ENCODE measurements at regions of chr17 and their contacts with region 1.

Region 1: DNA sequence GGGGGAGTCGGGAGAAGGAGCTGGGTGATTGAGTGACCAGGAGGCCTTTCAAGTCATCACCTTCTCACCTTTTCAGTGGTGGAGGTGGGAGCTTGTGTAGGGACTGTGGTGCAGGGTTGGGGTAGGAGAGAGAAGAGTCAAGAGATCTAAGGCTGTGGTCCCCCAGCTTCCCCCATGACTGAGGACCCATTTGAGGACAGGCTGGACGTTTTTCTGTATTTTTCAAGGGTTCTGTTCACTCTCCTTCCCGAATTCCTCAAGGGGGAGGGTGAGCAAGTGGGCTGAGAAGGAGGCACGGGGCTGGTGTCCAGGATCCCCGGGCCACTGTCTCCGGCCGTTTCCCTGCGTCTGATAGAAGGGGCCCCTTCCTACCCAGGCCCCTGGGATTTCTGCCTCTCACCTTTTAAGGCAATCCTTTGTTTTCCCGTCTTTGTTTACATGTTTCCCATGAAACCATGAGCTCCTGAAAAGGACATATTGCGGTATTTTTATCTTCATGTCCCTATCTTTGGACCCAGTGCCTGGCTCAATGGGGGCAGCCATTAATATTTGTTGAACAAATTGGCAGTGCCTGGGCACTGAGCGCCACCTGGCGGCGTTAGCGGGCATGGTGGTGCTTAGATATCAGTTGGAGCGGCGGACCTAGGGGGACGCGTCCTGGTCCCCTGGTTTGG is 9.2 kb upstream of the CD300A start:
- DNase-seq: peak; percentile 86
- ATAC-seq: peak; percentile 13
- H3K4me3 Mint-ChIP-seq: no peak overlapping the region
- H3K27ac Mint-ChIP-seq: no peak overlapping the region
- H3K4me1 Mint-ChIP-seq: peaks cover 36% of the 10 kb centered on the region
- H3K27me3 Mint-ChIP-seq: peaks cover 21% of the 10 kb centered on the region
- CTCF ChIP-seq: peak; percentile 89

Region 2: DNA sequence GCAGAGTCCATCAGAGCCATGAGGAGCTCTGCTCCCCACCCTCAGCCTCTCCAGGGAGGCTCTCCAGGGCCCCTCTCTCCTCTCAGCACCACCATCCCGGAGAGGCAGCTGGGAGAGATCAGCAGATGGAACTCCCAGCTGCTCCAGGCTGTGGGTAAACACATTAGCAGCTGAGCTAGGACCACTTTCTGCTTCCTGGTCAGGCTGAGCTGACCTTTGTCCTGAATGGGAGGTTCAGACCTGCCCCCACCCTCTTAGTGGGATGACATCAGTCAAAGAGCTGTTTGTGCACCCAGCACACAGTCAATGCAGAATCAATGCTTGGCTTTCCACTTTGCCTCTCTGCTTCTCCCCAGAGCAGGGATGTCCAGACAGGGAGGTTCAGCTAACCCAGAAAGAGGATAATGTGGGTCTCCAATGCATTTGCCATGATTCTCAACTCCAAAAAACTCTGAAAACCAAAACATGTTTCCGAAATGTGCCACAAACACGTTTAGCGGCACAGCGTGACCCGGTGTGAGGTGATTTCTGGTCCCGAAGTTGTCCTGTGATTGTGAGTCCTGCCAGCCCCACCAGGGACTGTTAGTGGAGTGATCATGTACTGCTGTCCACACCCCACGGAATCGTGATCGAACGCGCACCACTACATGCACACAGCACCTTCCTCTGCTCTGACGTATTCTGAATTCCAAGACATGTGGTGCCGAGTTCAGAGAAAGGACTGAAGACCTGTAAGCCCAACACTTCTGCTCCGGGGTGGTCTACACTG is 83.3 kb before region 1 on chr17:
- CTCF ChIA-PET with region 1: interaction called, 16 read pairs
- POLR2A ChIA-PET with region 1: interaction called, 14 read pairs
- DNase-seq: no peak
- ATAC-seq: no peak
- H3K4me3 Mint-ChIP-seq: no peak overlapping the region
- H3K27ac Mint-ChIP-seq: no peak overlapping the region; the same call in 1 of the 2 replicates
- H3K4me1 Mint-ChIP-seq: peaks cover 6% of the 10 kb centered on the region
- H3K27me3 Mint-ChIP-seq: peaks cover 2% of the 10 kb centered on the region; the same call in 1 of the 2 replicates
- CTCF ChIP-seq: no peak

Region 3: GRCh38 chr17:74430706-74431567 is 26.3 kb before region 1 on chr17:
- CTCF ChIA-PET with region 1: interaction called, 151 read pairs
- POLR2A ChIA-PET with region 1: interaction called, 17 read pairs
- DNase-seq: peak; percentile 77
- ATAC-seq: peak; percentile 7
- H3K4me3 Mint-ChIP-seq: peak overlapping the region; percentile 84
- H3K27ac Mint-ChIP-seq: peak overlapping the region; percentile 53
- H3K4me1 Mint-ChIP-seq: peaks cover 39% of the 10 kb centered on the region
- H3K27me3 Mint-ChIP-seq: peaks cover 37% of the 10 kb centered on the region
- CTCF ChIP-seq: no peak

Region 4: DNA sequence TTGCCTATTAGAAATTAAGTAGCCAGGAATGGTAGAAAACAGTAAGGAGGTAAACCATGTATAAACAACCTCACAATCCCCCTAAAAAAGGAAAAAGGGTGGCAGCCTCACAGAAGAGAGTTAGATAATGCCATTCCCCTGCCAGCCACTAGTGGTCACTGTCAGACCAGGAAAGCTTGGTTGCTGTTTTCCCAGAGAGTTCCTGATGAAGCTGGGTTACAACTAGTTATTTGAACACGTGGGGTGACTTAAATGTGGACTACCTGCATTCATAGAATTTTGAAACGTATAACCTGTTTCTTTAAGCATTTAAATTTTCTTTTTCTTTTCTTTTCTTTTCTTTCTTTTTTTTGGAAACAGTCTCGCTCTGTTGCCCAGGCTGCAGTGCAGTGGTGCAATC is 19.6 kb before region 1 on chr17:
- CTCF ChIA-PET with region 1: interaction called, 151 read pairs
- POLR2A ChIA-PET with region 1: interaction called, 12 read pairs
- DNase-seq: peak; percentile 52
- ATAC-seq: no peak
- H3K4me3 Mint-ChIP-seq: no peak overlapping the region
- H3K27ac Mint-ChIP-seq: no peak overlapping the region
- H3K4me1 Mint-ChIP-seq: peaks cover 18% of the 10 kb centered on the region
- H3K27me3 Mint-ChIP-seq: peaks cover 11% of the 10 kb centered on the region
- CTCF ChIP-seq: peak; percentile 82

Region 5: DNA sequence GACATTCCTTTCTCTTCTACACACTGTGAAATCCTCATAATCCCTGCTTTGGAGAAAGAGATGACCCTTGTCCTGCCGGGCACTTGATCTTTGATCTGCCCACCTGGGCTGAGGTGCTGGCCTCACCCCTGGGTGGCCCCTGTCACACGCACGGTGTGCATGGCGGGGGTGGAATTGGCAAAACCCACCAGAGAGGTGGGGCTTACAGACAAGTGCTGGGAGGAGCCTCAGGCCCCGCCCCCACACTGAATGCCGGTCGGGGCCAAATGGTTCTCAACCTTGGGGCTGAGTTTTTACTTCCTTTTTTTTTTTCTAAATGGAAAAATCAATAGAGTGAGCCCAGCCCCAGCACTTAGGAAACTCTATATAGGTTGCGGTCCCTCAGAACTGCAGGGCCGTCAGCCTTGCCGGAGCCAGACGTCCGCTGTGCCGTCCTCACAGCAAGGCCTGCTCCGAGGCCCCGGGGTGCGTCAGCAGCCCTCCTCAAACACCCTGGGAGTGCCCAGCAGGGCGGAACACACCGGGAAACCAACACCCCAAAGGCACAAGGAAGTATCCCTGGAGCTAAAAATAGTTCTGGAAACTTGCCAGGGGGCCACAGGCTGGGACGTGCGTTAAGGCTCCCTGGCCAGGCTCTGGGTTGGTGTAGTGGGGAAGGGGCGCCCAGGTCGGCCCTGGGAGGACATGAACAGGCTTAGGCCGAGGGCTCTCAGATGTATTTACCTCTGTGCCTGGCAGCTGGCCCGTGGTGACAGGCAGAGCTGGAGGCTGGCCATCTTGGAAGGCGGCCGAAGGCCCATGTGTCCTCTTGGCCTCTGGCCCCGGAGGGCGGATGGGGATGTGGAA is 14.4 kb before region 1 on chr17:
- CTCF ChIA-PET with region 1: interaction called, 151 read pairs
- POLR2A ChIA-PET with region 1: interaction called, 11 read pairs
- DNase-seq: peak; percentile 66
- ATAC-seq: peak; percentile 80
- H3K4me3 Mint-ChIP-seq: peak overlapping the region; percentile 20
- H3K27ac Mint-ChIP-seq: no peak overlapping the region
- H3K4me1 Mint-ChIP-seq: peaks cover 25% of the 10 kb centered on the region
- H3K27me3 Mint-ChIP-seq: no peaks in the 10 kb centered on the region
- CTCF ChIP-seq: no peak

Region 6: DNA sequence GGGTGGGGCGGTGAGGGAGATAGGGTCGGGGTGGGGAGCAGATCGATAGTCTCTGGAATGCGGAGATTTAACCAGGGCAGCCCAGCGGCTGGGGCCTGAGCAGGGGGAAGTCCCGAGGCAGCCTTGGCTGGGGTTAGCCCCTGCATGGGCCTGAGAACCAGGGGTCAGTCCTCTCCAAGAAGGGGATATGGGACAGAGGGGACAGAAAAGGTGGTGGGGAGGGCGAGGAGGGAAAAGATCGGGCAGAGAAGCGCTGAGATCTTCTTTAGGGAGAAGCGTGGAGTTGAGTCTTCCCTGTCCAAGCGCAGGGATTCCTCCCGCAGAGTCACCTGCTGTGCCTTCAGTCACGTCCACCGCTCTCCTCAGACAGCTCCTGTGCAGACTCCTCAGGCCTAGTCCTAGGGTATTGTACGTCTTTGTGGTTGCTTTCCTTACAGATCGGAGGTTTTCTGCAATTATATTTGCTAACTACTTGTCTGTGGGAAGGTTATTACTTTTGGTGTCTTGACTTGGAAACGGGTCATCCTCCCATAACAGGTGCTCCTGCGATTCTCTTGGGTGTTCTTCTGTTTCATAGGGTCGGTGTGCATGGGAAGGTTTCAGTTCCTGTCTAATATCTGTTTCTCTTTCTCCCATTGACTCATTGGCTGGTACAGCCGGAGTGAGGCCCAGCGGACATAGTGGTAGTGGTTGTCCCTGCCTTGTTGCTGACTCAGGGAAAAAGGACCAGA is 10.1 kb after region 1 on chr17:
- CTCF ChIA-PET with region 1: interaction called, 13 read pairs
- POLR2A ChIA-PET with region 1: interaction called, 3 read pairs
- DNase-seq: no peak
- ATAC-seq: peak; percentile 61
- H3K4me3 Mint-ChIP-seq: peak overlapping the region; percentile 59
- H3K27ac Mint-ChIP-seq: no peak overlapping the region
- H3K4me1 Mint-ChIP-seq: peaks cover 4% of the 10 kb centered on the region
- H3K27me3 Mint-ChIP-seq: peaks cover 17% of the 10 kb centered on the region
- CTCF ChIP-seq: no peak

Region 7: DNA sequence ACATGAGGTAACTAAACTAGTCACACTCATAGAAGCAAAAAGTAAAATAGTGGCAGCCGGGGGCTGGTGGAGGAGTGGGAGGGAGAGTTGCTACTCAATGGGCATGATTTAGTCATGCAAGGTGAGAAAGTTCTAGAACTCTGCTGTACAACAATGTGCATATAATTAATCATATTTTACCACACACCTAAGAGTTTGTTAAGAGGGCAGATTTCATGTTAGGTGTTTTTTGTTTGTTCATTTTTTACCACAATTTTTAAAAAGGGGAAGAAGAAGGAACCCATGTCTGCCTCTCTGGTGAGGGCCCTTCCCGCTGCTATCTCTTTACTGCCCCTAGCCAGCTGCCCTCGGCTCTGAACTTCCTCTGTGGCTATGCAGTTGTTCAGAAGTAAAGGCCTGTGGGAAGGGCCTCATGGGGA is 62.7 kb after region 1 on chr17:
- CTCF ChIA-PET with region 1: no interaction called
- POLR2A ChIA-PET with region 1: no interaction called
- DNase-seq: no peak
- ATAC-seq: no peak
- H3K4me3 Mint-ChIP-seq: no peak overlapping the region
- H3K27ac Mint-ChIP-seq: no peak overlapping the region
- H3K4me1 Mint-ChIP-seq: no peaks in the 10 kb centered on the region
- H3K27me3 Mint-ChIP-seq: peaks cover 14% of the 10 kb centered on the region
- CTCF ChIP-seq: no peak

Region 8: GRCh38 chr17:74584292-74585060 is 127.2 kb after region 1 on chr17:
- CTCF ChIA-PET with region 1: no interaction called
- POLR2A ChIA-PET with region 1: no interaction called
- DNase-seq: no peak
- ATAC-seq: no peak
- H3K4me3 Mint-ChIP-seq: no peak overlapping the region
- H3K27ac Mint-ChIP-seq: no peak overlapping the region
- H3K4me1 Mint-ChIP-seq: no peaks in the 10 kb centered on the region
- H3K27me3 Mint-ChIP-seq: peaks cover 3% of the 10 kb centered on the region; the same call in 1 of the 2 replicates
- CTCF ChIP-seq: no peak